ENCODE measurements at regions of chr5 and their contacts with region 1.

Region 1: GRCh38 chr5:156920042-156920860 is 42.8 kb downstream of the TIMD4 start:
- DNase-seq: peak; percentile 80
- H3K4me3 Mint-ChIP-seq: peak overlapping the region; percentile 89
- H3K27ac Mint-ChIP-seq: peak overlapping the region; percentile 99
- H3K4me1 Mint-ChIP-seq: peaks cover 80% of the 10 kb centered on the region
- H3K27me3 Mint-ChIP-seq: no peaks in the 10 kb centered on the region

Region 2: GRCh38 chr5:156178117-156178516 is 742.1 kb before region 1 on chr5:
- intact Hi-C with region 1: no loop called
- DNase-seq: no peak
- H3K4me3 Mint-ChIP-seq: no peak overlapping the region
- H3K27ac Mint-ChIP-seq: no peak overlapping the region
- H3K4me1 Mint-ChIP-seq: no peaks in the 10 kb centered on the region
- H3K27me3 Mint-ChIP-seq: no peaks in the 10 kb centered on the region

Region 3: GRCh38 chr5:156870498-156870839 is 49.8 kb before region 1 on chr5:
- intact Hi-C with region 1: loop called (anchors 5 kb)
- DNase-seq: no peak
- H3K4me3 Mint-ChIP-seq: peak overlapping the region; percentile 8
- H3K27ac Mint-ChIP-seq: peak overlapping the region; percentile 78
- H3K4me1 Mint-ChIP-seq: peaks cover 44% of the 10 kb centered on the region
- H3K27me3 Mint-ChIP-seq: no peaks in the 10 kb centered on the region

Region 4: DNA sequence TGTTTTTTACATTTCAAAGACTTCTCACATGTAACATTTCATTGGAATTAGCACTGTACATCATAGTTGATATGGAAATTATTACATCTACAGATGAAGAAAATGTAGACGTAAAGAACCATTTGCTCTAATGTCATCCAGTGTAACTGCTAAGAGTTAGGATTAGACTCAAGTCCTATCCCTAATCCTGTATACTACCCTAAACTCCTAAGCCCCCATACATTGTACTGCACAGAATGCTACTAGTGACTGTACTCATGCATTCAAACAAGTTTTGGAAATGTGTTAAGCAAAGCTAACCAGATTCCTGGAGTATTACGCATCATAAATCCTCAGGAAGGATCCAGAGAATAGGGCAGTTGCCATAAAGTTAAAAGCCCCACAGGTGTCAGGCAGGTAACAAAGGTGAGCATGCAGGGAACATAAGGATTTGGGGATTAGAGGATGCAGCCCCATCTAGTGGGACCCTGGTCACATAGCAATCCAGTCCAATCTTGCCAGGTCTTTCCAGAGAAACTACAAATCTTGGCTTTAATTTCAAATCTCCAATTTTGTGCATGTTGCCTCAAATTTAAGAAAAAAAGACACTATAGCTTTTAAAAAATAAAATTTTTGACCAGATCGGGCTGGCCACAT is 106.7 kb after region 1 on chr5:
- intact Hi-C with region 1: loop called (anchors 1 kb)
- DNase-seq: no peak
- H3K4me3 Mint-ChIP-seq: no peak overlapping the region
- H3K27ac Mint-ChIP-seq: peak overlapping the region; percentile 90
- H3K4me1 Mint-ChIP-seq: peaks cover 81% of the 10 kb centered on the region
- H3K27me3 Mint-ChIP-seq: peaks cover 3% of the 10 kb centered on the region

Region 5: DNA sequence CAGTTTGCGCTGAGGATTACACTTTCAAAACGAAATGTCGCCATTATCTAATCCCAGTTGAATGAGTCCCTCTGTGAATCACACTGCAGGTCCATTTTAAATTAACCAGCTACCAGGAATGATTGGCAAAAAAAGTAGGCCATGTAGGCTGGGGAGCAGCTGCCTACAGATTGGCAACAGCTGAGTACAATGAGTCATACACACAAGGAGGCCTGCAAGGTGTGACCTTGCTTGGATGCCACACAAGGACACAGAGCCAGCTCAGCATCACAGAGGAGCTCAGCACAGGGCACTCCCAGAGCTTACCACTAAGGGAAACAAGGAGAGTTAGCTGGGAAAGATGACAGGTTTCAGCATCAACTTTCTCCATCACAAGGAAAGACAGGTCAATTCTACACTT is 125.8 kb after region 1 on chr5:
- intact Hi-C with region 1: no loop called
- DNase-seq: no peak
- H3K4me3 Mint-ChIP-seq: no peak overlapping the region
- H3K27ac Mint-ChIP-seq: peak overlapping the region; percentile 13
- H3K4me1 Mint-ChIP-seq: peaks cover 53% of the 10 kb centered on the region
- H3K27me3 Mint-ChIP-seq: no peaks in the 10 kb centered on the region

Region 6: DNA sequence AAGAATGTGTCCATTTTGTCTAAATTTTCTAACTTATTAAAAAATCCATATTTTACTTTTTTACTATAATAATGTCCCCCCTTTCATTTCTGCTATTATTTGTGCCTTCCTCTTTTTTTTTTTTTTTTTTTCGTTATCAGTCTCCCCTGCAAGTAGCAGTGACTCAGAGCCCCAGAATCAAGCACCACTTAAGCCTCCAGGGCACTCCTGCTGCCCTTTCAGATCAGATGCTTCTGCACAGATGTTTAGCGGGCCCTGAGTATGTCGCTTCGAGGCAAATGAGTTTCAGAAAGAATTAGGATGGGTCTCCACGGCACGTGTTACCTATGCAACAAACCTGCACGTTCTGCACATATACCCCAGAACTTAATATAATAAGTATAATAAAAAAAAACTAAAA is 210.7 kb after region 1 on chr5:
- intact Hi-C with region 1: loop called (anchors 1 kb)
- DNase-seq: no peak
- H3K4me3 Mint-ChIP-seq: no peak overlapping the region
- H3K27ac Mint-ChIP-seq: no peak overlapping the region
- H3K4me1 Mint-ChIP-seq: peaks cover 41% of the 10 kb centered on the region
- H3K27me3 Mint-ChIP-seq: no peaks in the 10 kb centered on the region

Region 7: DNA sequence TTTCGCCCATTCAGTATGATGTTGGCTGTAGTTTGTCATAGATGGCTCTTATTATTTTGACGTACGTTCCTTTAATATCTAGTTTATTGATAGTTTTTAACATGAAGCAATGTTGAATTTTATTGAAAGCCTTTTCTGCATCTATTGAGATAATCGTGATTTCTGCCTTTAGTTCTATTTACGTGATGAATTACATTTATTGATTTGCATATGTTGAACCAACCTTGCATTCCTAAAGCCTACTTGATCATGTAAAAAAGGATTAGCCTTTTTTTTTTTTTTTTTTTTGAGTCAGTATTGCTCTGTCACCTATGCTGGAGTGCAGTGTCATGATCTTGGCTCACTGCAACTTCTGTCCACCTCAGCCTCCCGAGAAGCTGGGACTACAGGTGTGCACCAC is 285.5 kb after region 1 on chr5:
- intact Hi-C with region 1: no loop called
- DNase-seq: no peak
- H3K4me3 Mint-ChIP-seq: no peak overlapping the region
- H3K27ac Mint-ChIP-seq: no peak overlapping the region
- H3K4me1 Mint-ChIP-seq: peaks cover 81% of the 10 kb centered on the region
- H3K27me3 Mint-ChIP-seq: no peaks in the 10 kb centered on the region

Region 8: GRCh38 chr5:157219491-157220271 is 299.4 kb after region 1 on chr5:
- intact Hi-C with region 1: loop called (anchors 1 kb)
- DNase-seq: peak; percentile 43
- H3K4me3 Mint-ChIP-seq: peak overlapping the region; percentile 41
- H3K27ac Mint-ChIP-seq: peak overlapping the region; percentile 93
- H3K4me1 Mint-ChIP-seq: peaks cover 81% of the 10 kb centered on the region
- H3K27me3 Mint-ChIP-seq: no peaks in the 10 kb centered on the region

Region 9: DNA sequence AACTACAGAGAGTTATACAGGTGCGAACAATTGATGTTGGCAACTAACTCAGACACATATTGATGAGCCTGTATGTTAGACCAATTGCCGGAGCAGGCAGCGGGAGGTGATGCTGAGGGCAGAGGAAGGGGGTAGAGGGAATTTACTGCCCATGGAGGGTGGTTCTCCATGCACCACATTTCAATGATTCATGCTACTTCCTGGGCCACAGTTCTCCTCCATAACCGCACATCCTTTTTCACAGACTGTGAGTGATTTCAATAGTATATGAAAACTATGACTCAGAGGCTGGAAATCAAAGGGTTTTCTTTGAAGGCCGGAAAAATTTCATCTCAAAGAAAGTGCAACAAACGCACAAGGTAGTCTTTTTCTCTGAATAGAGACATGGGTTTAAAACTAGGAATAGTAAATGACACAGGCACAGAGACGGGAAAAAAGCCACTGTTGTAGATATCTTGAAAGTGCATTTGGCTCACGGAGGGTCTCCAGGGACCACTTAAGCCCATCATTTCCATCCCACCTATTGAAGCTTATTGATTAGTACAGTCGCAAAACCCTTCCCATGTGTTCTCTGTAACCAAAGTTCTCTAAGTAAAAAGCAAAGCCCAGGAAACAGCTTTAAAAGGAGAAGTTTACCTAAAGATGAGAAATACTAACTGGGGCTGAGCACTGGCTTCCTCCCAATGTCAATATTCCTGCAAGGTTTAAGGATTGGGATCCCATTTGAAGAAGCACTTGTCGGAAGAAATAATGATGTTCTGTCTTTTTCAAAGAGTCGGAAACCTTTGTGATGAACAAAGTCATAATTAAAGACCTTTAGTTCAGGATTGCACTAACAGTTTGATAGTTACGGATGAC is 683.3 kb after region 1 on chr5:
- intact Hi-C with region 1: loop called (anchors 5 kb)
- DNase-seq: peak; percentile 74
- H3K4me3 Mint-ChIP-seq: peak overlapping the region; percentile 59
- H3K27ac Mint-ChIP-seq: peak overlapping the region; percentile 88
- H3K4me1 Mint-ChIP-seq: peaks cover 79% of the 10 kb centered on the region
- H3K27me3 Mint-ChIP-seq: no peaks in the 10 kb centered on the region